Dorsolateral prefrontal cortex (tissue), 120 donors: ENCODE measurements at regions of chr18 and their contacts with region 1.

Region 1: GRCh38 chr18:8608795-8609658 is at the start of gene RAB12:
- DNase-seq: peak; percentile 58 to 92 (median 81)
- H3K4me3 ChIP-seq: peak within 1 kb of the TSS; percentile 67 to 99 (median 90)
- H3K27ac ChIP-seq: peak within 1 kb of the TSS in 55 of 59 donors; percentile 42 to 88 (median 76)
- H3K27me3 ChIP-seq: no peaks in the 10 kb centered on the region
- CTCF ChIP-seq: peak; percentile 20 to 91 (median 64)
- total RNA-seq, gene RAB12: 31.1 to 69.1 (median 52.0) TPM

Region 2: DNA sequence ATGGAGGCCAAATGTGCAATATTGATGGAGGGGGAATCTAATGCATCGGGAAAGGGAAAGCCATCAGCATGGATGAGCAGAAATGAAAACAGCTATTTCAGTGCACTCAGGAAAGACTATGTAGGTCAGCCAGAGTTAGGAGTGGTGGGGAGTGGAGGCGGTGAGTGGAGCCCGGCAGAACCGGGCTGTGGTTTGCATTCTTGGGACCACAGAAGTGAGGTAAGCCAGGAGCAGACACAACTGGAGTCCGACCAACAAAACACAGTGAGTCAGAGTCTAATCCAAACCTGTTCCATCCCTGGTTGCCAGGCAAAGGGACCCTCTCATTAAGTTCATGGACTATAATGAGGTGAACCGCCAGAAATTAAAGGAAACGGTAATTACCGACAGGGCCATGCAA is 60.8 kb before region 1 on chr18:
- intact Hi-C with region 1: no loop called
- DNase-seq: no peak
- H3K4me3 ChIP-seq: no peak overlapping the region
- H3K27ac ChIP-seq: no peak overlapping the region
- H3K27me3 ChIP-seq: peaks cover 0 to 7% (median 0%) of the 10 kb centered on the region in 45 donors
- CTCF ChIP-seq: no peak

Region 3: GRCh38 chr18:8696749-8697211 is 87.8 kb after region 1 on chr18:
- intact Hi-C with region 1: loop called (anchors 5 to 10 kb)
- DNase-seq: peak in 8 of 10 donors; percentile 57 to 86 (median 82)
- H3K4me3 ChIP-seq: no peak overlapping the region
- H3K27ac ChIP-seq: no peak overlapping the region
- H3K27me3 ChIP-seq: no peaks in the 10 kb centered on the region
- CTCF ChIP-seq: peak; percentile 85 to 98 (median 94)

Region 4: DNA sequence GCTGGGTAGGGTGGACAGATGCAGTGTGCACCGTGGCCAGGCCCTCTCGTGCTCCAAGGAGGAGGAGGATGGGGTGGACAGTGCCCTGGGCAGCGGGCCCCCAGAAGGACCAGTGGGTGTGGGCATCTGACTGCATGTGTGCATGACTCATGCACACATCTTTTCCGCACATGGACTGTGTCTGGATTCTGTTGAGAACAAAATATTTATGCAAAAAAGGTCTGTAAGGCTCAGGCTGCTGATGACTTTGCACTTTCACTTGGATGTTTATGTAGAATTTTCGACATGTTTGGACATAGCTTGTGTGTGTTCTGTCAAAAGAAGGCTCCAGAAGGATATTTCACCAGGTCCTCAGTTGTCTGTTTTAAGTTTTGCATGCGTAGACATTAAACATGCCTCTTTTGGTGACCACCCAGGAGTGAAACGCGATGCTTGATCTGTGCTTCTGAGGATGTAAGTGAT is 142.0 kb after region 1 on chr18:
- intact Hi-C with region 1: no loop called
- DNase-seq: peak in 1 of 10 donors; percentile 21
- H3K4me3 ChIP-seq: no peak overlapping the region
- H3K27ac ChIP-seq: peak overlapping the region in 5 of 59 donors; percentile 12 to 49 (median 17)
- H3K27me3 ChIP-seq: no peaks in the 10 kb centered on the region
- CTCF ChIP-seq: no peak

Region 5: GRCh38 chr18:8800449-8800848 is 191.4 kb after region 1 on chr18:
- intact Hi-C with region 1: no loop called
- DNase-seq: no peak
- H3K4me3 ChIP-seq: no peak overlapping the region
- H3K27ac ChIP-seq: peak overlapping the region in 4 of 59 donors; percentile 18 to 72 (median 21)
- H3K27me3 ChIP-seq: no peaks in the 10 kb centered on the region
- CTCF ChIP-seq: no peak